ENCODE measurements at regions of chr10 and their contacts with region 1.

Region 1: DNA sequence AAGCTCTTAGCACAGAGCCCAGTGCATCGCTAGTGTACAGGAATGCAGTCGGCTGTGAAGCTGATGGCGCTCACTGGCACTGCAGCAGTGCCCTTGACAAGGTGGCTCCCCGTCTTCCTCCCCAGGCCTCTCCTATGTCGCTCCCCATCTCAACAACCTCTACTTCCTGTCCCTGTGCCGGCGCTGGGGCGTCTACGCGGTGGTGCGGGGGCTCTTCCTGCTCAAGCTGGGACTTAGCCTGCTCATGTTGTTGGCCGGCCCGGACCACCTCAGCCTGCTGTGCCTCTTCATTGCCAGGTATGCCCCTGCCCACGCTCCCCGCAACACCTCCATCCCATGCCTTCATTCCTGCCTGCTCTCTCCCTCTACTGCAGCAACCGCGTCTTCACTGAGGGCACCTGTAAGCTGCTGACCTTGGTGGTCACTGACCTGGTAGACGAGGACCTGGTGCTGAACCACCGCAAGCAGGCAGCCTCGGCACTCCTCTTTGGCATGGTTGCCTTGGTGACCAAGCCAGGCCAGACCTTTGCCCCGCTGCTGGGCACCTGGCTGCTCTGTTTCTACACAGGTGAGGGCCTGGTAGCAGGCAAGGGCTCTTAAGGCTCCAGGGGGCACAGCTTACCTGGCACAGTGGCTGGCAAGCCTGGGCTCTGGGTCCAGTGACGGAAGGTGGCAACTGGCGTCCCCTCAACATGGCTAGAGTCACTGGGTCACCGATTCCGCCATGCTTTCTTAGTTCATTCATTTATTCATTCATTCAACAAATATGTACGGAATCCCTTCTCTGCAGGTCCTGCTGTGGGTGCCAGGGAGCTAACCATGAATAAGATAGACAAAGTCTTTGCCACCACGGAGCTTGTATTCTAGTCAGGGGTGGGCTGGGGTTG is 22.3 kb upstream of the C10orf95 start:
- DNase-seq: peak in 5 of 9 donors; percentile 32 to 45 (median 34)
- ATAC-seq: peak; percentile 64
- H3K4me3 ChIP-seq: no peak overlapping the region
- H3K4me3 Mint-ChIP-seq: peak overlapping the region; percentile 18 to 74 (median 60)
- H3K27ac ChIP-seq: peak overlapping the region; percentile 59
- H3K27ac Mint-ChIP-seq: peak overlapping the region; percentile 71 to 96 (median 86)
- H3K4me1 ChIP-seq: peaks cover 9 to 12% of the 10 kb centered on the region in 2 donors
- H3K4me1 Mint-ChIP-seq: peaks cover 13 to 47% (median 32%) of the 10 kb centered on the region in 7 donors
- H3K27me3 ChIP-seq: no peaks in the 10 kb centered on the region
- H3K27me3 Mint-ChIP-seq: no peaks in the 10 kb centered on the region

Region 2: GRCh38 chr10:102461187-102462054 is 12.3 kb before region 1 on chr10:
- CTCF ChIA-PET with region 1: interaction called, 4 read pairs
- POLR2A ChIA-PET with region 1: interaction called, 15 read pairs
- intact Hi-C with region 1: loop called in 1 of 2 experiments (anchors 2 kb)
- DNase-seq: peak; percentile 84 to 95 (median 90)
- ATAC-seq: peak; percentile 99
- H3K4me3 ChIP-seq: peak overlapping the region; percentile 93
- H3K4me3 Mint-ChIP-seq: peak overlapping the region; percentile 83 to 96 (median 92)
- H3K27ac ChIP-seq: peak overlapping the region; percentile 74
- H3K27ac Mint-ChIP-seq: peak overlapping the region; percentile 72 to 90 (median 85)
- H3K4me1 ChIP-seq: peaks cover 9 to 14% of the 10 kb centered on the region in 2 donors
- H3K4me1 Mint-ChIP-seq: peaks cover 19 to 40% (median 34%) of the 10 kb centered on the region in 7 donors
- H3K27me3 ChIP-seq: no peaks in the 10 kb centered on the region
- H3K27me3 Mint-ChIP-seq: peaks cover 0 to 2% (median 0%) of the 10 kb centered on the region in 5 donors

Region 3: GRCh38 chr10:103781329-103782061 is 1307.8 kb after region 1 on chr10:
- CTCF ChIA-PET with region 1: no interaction called
- POLR2A ChIA-PET with region 1: no interaction called
- intact Hi-C with region 1: no loop called
- DNase-seq: no peak
- ATAC-seq: no peak
- H3K4me3 ChIP-seq: no peak overlapping the region
- H3K4me3 Mint-ChIP-seq: peak overlapping the region in 1 of 10 donors; percentile 33
- H3K27ac ChIP-seq: no peak overlapping the region
- H3K27ac Mint-ChIP-seq: peak overlapping the region in 1 of 9 donors; percentile 20
- H3K4me1 ChIP-seq: no peaks in the 10 kb centered on the region
- H3K4me1 Mint-ChIP-seq: peaks cover 0 to 21% (median 5%) of the 10 kb centered on the region in 7 donors
- H3K27me3 ChIP-seq: no peaks in the 10 kb centered on the region
- H3K27me3 Mint-ChIP-seq: peaks cover 0 to 27% (median 8%) of the 10 kb centered on the region in 5 donors

Measured in naive thymus-derived CD4-positive, alpha-beta T cell (primary cell).